B cell (primary cell): ENCODE measurements at regions of chr7 and their contacts with region 1.

Region 1: DNA sequence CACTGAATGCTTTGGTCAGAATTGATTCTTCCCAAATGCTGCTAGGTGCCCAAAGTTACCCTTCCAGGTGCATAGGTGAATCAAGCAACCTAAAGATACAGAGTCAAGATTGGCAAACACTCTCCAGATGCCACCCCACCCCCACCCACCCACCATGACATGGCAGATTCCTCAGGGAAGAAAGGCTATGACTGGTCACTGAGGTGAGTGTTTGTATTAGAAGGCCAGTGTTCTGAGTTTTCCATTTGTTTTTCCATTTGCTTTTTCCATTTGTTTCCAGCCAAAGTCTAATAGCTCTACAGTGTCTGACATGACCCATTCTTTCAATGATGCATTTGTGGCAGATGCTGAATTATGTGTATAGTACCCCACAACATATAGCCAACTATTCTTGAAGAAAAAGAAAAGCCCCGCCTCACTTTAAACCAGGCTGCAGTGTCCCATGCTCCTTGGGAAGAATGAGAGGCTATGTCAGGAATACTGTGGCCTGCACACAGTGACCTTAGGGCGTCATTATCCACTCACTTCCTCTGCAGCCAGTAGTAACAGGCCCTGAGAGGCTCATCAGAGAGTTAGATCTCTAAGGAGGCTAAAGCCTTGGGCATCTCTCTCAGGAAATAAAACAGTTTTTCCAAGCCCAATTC is 16.1 kb upstream of the HIBADH start:
- DNase-seq: no peak
- ATAC-seq: no peak
- H3K4me3 ChIP-seq: no peak overlapping the region
- H3K4me3 Mint-ChIP-seq: no peak overlapping the region
- H3K27ac ChIP-seq: no peak overlapping the region
- H3K27ac Mint-ChIP-seq: no peak overlapping the region
- H3K4me1 ChIP-seq: no peaks in the 10 kb centered on the region
- H3K4me1 Mint-ChIP-seq: no peaks in the 10 kb centered on the region
- H3K27me3 ChIP-seq: no peaks in the 10 kb centered on the region
- H3K27me3 Mint-ChIP-seq: no peaks in the 10 kb centered on the region
- CTCF ChIP-seq: no peak

Region 2: GRCh38 chr7:26490650-26491624 is 1187.8 kb before region 1 on chr7:
- CTCF ChIA-PET with region 1: no interaction called
- POLR2A ChIA-PET with region 1: interaction called, 10 read pairs
- intact Hi-C with region 1: no loop called
- DNase-seq: no peak
- ATAC-seq: no peak
- H3K4me3 ChIP-seq: no peak overlapping the region
- H3K4me3 Mint-ChIP-seq: no peak overlapping the region
- H3K27ac ChIP-seq: no peak overlapping the region
- H3K27ac Mint-ChIP-seq: no peak overlapping the region
- H3K4me1 ChIP-seq: no peaks in the 10 kb centered on the region
- H3K4me1 Mint-ChIP-seq: no peaks in the 10 kb centered on the region
- H3K27me3 ChIP-seq: peaks cover 0 to 19% (median 0%) of the 10 kb centered on the region in 4 experiments
- H3K27me3 Mint-ChIP-seq: peaks cover 18% of the 10 kb centered on the region
- CTCF ChIP-seq: no peak

Region 3: DNA sequence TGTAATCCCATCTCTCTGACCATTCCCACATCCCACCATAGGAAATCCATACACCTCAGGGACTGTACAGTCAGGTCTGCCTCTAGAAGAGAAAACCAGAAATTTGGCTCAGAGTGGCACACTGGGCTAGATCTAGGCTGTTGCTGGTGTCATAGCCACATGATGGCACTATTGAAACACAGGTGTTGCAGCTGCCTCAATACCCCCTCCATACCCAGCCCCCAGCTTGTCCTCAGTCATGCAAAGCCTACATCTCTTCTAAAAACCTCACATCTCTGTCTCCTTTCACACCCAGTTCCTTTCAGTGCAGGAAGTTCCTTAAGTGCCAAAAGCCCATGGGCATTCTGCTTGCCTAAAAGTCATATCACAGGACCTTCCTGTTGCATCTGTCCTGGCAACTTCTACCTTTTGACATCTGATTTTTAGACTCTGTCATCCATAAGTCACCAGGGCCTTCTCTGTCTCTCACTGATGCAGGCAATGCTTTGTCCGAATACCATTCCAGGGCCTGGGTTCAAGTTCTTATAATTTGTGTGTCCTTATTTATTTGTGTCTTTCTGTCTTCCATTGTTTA is 10.9 kb after region 1 on chr7:
- CTCF ChIA-PET with region 1: no interaction called
- POLR2A ChIA-PET with region 1: no interaction called
- intact Hi-C with region 1: no loop called
- DNase-seq: peak; percentile 39
- ATAC-seq: peak; percentile 51
- H3K4me3 ChIP-seq: no peak overlapping the region
- H3K4me3 Mint-ChIP-seq: no peak overlapping the region
- H3K27ac ChIP-seq: no peak overlapping the region
- H3K27ac Mint-ChIP-seq: no peak overlapping the region
- H3K4me1 ChIP-seq: no peaks in the 10 kb centered on the region
- H3K4me1 Mint-ChIP-seq: no peaks in the 10 kb centered on the region
- H3K27me3 ChIP-seq: no peaks in the 10 kb centered on the region
- H3K27me3 Mint-ChIP-seq: peaks cover 8% of the 10 kb centered on the region
- CTCF ChIP-seq: peak; percentile 30